ENCODE measurements at regions of chr5 and their contacts with region 1.

Region 1: GRCh38 chr5:86917117-86917579 is 299.4 kb downstream of the COX7C start:
- DNase-seq: peak; percentile 1
- H3K4me3 Mint-ChIP-seq: no peak overlapping the region
- H3K27ac Mint-ChIP-seq: no peak overlapping the region
- H3K4me1 Mint-ChIP-seq: peaks cover 21% of the 10 kb centered on the region
- H3K27me3 Mint-ChIP-seq: peaks cover 17% of the 10 kb centered on the region

Region 2: GRCh38 chr5:86617756-86618576 is 299.2 kb before region 1 on chr5 and contains the start of gene COX7C:
- intact Hi-C with region 1: loop called (anchors 1 kb)
- DNase-seq: peak; percentile 90
- H3K4me3 Mint-ChIP-seq: peak within 1 kb of the TSS; percentile 98
- H3K27ac Mint-ChIP-seq: peak within 1 kb of the TSS; percentile 95
- H3K4me1 Mint-ChIP-seq: peaks cover 16% of the 10 kb centered on the region
- H3K27me3 Mint-ChIP-seq: peaks cover 7% of the 10 kb centered on the region
- total RNA-seq, gene COX7C: 436 and 471 TPM in 2 replicates

Region 3: DNA sequence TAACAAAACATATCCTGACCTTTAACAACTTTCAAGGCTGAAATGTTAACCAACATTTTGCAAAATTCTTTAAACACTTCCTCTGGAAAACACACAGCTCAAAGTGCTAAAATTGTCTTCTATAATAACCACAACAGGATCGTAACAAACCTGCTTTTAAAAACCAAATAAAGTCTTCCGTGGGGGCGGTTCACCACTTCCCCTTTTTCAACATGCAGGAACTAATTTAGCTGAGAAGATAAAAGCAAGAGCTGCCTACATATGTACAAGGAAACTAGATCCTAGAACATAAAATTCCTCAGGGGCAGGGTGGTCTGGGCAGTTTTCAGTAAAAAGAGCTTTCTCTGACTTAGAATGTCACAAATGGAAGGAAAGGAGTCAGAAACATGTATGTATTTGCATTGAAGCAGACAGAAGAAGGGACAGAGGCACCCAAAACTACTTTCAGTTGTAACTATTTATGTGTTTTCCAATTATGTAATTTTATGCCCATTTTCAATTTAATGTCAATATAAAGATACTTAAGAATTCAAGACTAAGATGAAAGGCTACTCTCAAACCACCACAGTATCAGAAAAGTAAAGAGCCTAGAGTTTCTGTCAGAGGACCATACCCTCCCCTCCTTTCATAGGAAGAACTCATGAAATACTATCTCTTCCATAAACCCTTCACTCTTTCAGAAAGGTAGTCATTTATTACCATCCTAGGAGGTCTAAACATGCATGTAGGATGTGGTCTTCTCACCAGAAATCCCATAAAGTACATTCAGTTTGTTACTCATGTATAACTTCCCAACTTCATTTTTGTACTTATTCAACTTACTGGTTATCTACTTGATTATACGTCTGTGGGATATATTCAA is 164.6 kb after region 1 on chr5:
- intact Hi-C with region 1: loop called (anchors 5 kb)
- DNase-seq: peak; percentile 41
- H3K4me3 Mint-ChIP-seq: peak overlapping the region; percentile 65
- H3K27ac Mint-ChIP-seq: peak overlapping the region; percentile 73
- H3K4me1 Mint-ChIP-seq: peaks cover 55% of the 10 kb centered on the region
- H3K27me3 Mint-ChIP-seq: no peaks in the 10 kb centered on the region

Region 4: DNA sequence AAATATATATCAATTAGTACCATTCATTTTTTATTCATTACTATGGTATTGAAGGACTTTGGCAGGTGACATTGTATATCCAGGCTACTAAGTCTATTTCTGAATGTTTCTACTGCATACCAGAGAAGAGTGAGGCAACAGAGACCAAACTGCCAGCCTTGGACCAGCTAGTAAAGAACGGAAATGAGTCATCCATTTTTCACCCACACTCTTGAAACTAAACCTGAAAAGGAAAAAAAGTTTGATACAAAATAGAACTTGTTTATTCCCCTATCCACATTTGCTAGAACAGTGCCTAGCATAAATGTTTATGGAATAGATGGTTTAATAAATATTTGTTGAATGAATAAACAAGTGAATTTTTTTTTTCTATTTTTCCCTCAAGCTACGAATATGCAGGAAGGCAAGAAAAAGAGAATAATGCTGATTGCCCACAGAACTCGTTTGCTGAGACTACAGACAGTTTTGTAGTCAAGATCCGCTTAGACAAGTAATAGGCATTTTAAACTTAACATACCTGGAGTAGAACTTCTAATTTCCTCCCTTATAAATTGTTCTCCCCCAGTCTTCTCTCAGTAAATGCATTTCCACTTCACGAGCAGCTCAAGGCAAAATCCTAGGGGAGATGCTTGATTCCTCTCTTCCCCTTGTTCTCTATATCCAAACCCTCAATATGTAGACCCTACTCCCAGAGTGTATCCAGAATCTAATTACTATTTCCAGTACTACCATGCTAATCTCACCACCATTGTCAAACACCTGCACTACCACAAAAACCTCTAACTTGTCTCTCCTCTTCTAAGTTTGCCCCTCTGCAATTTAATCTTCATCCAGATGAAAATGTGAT is 204.4 kb after region 1 on chr5:
- intact Hi-C with region 1: loop called (anchors 2 kb)
- DNase-seq: peak; percentile 17
- H3K4me3 Mint-ChIP-seq: peak overlapping the region; percentile 40
- H3K27ac Mint-ChIP-seq: peak overlapping the region; percentile 73
- H3K4me1 Mint-ChIP-seq: peaks cover 59% of the 10 kb centered on the region
- H3K27me3 Mint-ChIP-seq: no peaks in the 10 kb centered on the region

Region 5: GRCh38 chr5:87231037-87231819 is 314.1 kb after region 1 on chr5:
- intact Hi-C with region 1: loop called (anchors 1 kb)
- DNase-seq: no peak
- H3K4me3 Mint-ChIP-seq: no peak overlapping the region
- H3K27ac Mint-ChIP-seq: no peak overlapping the region
- H3K4me1 Mint-ChIP-seq: peaks cover 5% of the 10 kb centered on the region
- H3K27me3 Mint-ChIP-seq: peaks cover 3% of the 10 kb centered on the region

Region 6: GRCh38 chr5:87340716-87341115 is 423.6 kb after region 1 on chr5:
- intact Hi-C with region 1: loop called (anchors 1 kb)
- DNase-seq: no peak
- H3K4me3 Mint-ChIP-seq: peak overlapping the region; percentile 70
- H3K27ac Mint-ChIP-seq: peak overlapping the region; percentile 86
- H3K4me1 Mint-ChIP-seq: peaks cover 32% of the 10 kb centered on the region
- H3K27me3 Mint-ChIP-seq: no peaks in the 10 kb centered on the region

Region 7: GRCh38 chr5:88833371-88834130 is 1916.4 kb after region 1 on chr5:
- intact Hi-C with region 1: loop called (anchors 5 kb)
- DNase-seq: no peak
- H3K4me3 Mint-ChIP-seq: no peak overlapping the region
- H3K27ac Mint-ChIP-seq: no peak overlapping the region
- H3K4me1 Mint-ChIP-seq: peaks cover 16% of the 10 kb centered on the region
- H3K27me3 Mint-ChIP-seq: no peaks in the 10 kb centered on the region

Measured in activated T-helper 1 cell treated with anti-CD3 and anti-CD28 coated beads, Interleukin-12 subunit alpha, Interleukin-12 subunit beta, Interleukin-2, Interleukin-4 antibody, amounts not matched to agents 30 ng/mL and 10 ng/mL and 1 ng/mL, durations not matched to agents 14 hours and 24 hours and 36 hours (primary cell).